ENCODE measurements at regions of chr16 and their contacts with region 1.

Region 1: GRCh38 chr16:27367461-27368357 is 34.3 kb upstream of the IL21R start:
- DNase-seq: peak; percentile 76
- ATAC-seq: peak; percentile 78
- H3K4me3 Mint-ChIP-seq: peak overlapping the region; percentile 70
- H3K27ac Mint-ChIP-seq: peak overlapping the region; percentile 96
- H3K4me1 Mint-ChIP-seq: peaks cover 71% of the 10 kb centered on the region
- H3K27me3 Mint-ChIP-seq: no peaks in the 10 kb centered on the region
- CTCF ChIP-seq: no peak

Region 2: DNA sequence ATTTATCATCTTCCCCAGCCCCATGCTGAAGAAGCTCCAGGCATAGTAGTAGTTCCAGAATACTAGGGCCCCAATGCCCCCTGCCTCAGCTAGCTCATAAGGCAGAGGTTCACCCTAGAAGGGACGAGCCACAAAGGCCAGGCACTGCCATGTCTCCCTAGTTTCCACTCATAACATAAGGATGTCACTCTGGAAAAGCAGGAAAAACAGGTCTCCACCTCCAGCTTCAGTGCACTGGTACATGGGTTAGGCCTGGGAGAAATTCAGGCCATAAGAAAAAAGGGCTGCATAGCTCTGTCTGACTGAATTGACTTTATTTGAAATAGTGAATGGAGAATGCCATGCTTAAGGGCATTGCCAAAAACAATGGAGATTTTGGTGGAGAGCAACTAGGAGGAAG is 669.2 kb before region 1 on chr16:
- CTCF ChIA-PET with region 1: no interaction called
- POLR2A ChIA-PET with region 1: interaction called, 11 read pairs
- intact Hi-C with region 1: no loop called
- DNase-seq: no peak
- ATAC-seq: no peak
- H3K4me3 Mint-ChIP-seq: no peak overlapping the region
- H3K27ac Mint-ChIP-seq: no peak overlapping the region
- H3K4me1 Mint-ChIP-seq: peaks cover 7% of the 10 kb centered on the region
- H3K27me3 Mint-ChIP-seq: peaks cover 23% of the 10 kb centered on the region
- CTCF ChIP-seq: no peak

Region 3: DNA sequence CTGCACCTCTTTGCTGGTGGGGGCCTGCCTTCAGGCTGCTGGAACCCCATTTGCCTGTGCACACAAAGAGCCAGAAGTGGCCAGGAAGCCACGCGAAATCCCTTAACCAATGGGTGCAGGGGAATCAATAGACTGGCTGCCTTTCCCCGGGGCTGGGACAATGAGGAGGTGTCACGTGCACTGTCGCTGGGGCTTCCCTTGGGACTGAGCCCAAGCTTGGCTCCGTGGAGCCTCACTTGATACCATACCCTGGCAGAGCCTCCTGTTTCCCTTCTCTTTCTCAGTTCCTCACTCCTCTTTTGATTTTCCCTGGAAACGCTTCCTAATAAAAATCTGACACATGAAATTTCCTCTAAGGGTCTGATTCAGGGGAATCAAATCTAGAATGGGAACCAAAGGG is 339.7 kb before region 1 on chr16:
- CTCF ChIA-PET with region 1: no interaction called
- POLR2A ChIA-PET with region 1: no interaction called
- intact Hi-C with region 1: no loop called
- DNase-seq: no peak
- ATAC-seq: no peak
- H3K4me3 Mint-ChIP-seq: no peak overlapping the region
- H3K27ac Mint-ChIP-seq: no peak overlapping the region
- H3K4me1 Mint-ChIP-seq: no peaks in the 10 kb centered on the region
- H3K27me3 Mint-ChIP-seq: peaks cover 4% of the 10 kb centered on the region
- CTCF ChIP-seq: no peak

Region 4: GRCh38 chr16:27179500-27180072 is 188.1 kb before region 1 on chr16:
- CTCF ChIA-PET with region 1: interaction called, 37 read pairs
- POLR2A ChIA-PET with region 1: interaction called, 13 read pairs
- intact Hi-C with region 1: loop called (anchors 1 kb)
- DNase-seq: peak; percentile 73
- ATAC-seq: peak; percentile 99
- H3K4me3 Mint-ChIP-seq: no peak overlapping the region
- H3K27ac Mint-ChIP-seq: peak overlapping the region; percentile 5
- H3K4me1 Mint-ChIP-seq: peaks cover 28% of the 10 kb centered on the region
- H3K27me3 Mint-ChIP-seq: no peaks in the 10 kb centered on the region
- CTCF ChIP-seq: peak; percentile 49

Region 5: GRCh38 chr16:27253526-27253930 is 114.2 kb before region 1 on chr16:
- CTCF ChIA-PET with region 1: interaction called, 3 read pairs
- POLR2A ChIA-PET with region 1: interaction called, 20 read pairs
- intact Hi-C with region 1: no loop called
- DNase-seq: no peak
- ATAC-seq: peak; percentile 40
- H3K4me3 Mint-ChIP-seq: peak overlapping the region; percentile 65
- H3K27ac Mint-ChIP-seq: peak overlapping the region; percentile 88
- H3K4me1 Mint-ChIP-seq: peaks cover 65% of the 10 kb centered on the region
- H3K27me3 Mint-ChIP-seq: no peaks in the 10 kb centered on the region
- CTCF ChIP-seq: no peak

Region 6: DNA sequence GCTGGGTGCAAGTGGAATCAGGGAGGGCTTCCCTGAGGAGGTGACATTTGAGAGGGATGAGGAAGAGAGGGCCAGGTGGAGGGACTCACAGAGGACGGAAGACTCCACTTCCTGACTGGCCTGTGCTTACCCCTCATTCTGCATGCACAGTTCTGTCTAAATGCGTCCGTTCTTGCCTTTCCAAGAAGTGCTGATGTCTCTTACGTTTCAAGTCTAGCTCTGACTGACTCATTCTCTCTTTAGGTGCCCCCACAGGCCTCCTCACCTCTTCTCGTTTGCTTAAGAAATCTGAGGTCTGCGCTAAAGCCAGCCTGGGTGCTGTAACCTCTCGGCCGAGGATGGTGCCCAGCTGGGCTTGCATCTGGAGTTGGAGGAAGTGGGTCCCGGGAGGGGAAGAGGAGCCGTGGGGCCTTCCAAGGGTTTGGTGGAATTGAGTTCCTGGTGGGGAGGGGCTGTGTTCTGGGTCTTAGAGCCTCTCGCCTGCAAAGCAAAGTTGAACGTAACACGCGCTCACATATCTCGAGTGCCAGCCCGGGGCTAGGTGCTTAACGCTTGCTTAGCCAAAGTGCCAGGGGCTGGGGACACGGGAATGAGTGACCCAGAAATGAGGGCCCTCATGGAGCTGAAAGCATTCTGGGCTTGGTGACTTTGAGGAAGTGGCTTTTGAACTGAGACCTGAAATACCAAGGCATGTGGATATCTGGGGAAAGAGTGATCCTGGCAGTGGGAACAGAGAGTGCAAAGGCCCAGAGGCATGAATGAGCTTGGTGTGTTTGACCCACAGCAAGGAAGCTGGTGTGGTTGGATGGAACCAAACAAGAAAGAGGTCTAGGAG is 49.1 kb before region 1 on chr16:
- CTCF ChIA-PET with region 1: interaction called, 7 read pairs
- POLR2A ChIA-PET with region 1: interaction called, 27 read pairs
- intact Hi-C with region 1: loop called (anchors 1 kb)
- DNase-seq: peak; percentile 43
- ATAC-seq: peak; percentile 72
- H3K4me3 Mint-ChIP-seq: peak overlapping the region; percentile 88
- H3K27ac Mint-ChIP-seq: peak overlapping the region; percentile 90
- H3K4me1 Mint-ChIP-seq: peaks cover 90% of the 10 kb centered on the region
- H3K27me3 Mint-ChIP-seq: no peaks in the 10 kb centered on the region
- CTCF ChIP-seq: no peak

Region 7: GRCh38 chr16:27426423-27427408 is 59.0 kb after region 1 on chr16:
- CTCF ChIA-PET with region 1: interaction called, 9 read pairs
- POLR2A ChIA-PET with region 1: interaction called, 37 read pairs
- intact Hi-C with region 1: no loop called
- DNase-seq: peak; percentile 62
- ATAC-seq: peak; percentile 79
- H3K4me3 Mint-ChIP-seq: peak overlapping the region; percentile 65
- H3K27ac Mint-ChIP-seq: peak overlapping the region; percentile 88
- H3K4me1 Mint-ChIP-seq: peaks cover 83% of the 10 kb centered on the region
- H3K27me3 Mint-ChIP-seq: no peaks in the 10 kb centered on the region
- CTCF ChIP-seq: no peak

Measured in activated B cell treated with CpG ODN at 0.5 μM for 24 hours (primary cell).